ENCODE measurements at regions of chr16 and their contacts with region 1.

Region 1: DNA sequence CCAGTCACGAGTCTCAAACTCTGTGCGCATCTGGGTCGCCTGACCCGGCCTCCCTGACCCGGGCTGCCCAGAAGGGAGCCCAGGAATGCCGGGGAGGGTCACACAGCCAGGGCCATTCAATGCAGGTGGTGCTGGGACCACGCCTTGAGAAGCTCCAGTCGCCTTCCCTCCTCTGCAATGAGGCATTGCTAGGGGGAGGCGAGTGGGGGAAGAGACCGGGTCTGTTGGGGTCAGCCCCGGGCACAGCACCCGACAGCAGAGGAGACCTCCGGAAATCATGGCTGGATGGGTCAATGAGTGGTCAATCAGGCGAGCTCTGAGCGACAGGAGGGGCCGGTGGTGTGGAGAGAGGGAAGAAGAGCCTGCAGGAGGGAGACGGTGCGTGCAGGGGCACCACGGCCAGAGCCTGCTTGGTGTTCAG is 13.3 kb downstream of the JPH3 start:
- DNase-seq: no peak
- H3K4me3 Mint-ChIP-seq: no peak overlapping the region
- H3K27ac Mint-ChIP-seq: no peak overlapping the region
- H3K4me1 Mint-ChIP-seq: no peaks in the 10 kb centered on the region
- H3K27me3 Mint-ChIP-seq: peaks cover 70% of the 10 kb centered on the region
- CTCF ChIP-seq: no peak

Region 2: GRCh38 chr16:87563714-87564523 is 51.7 kb before region 1 on chr16:
- CTCF ChIA-PET with region 1: no interaction called
- intact Hi-C with region 1: loop called (anchors 2 kb)
- DNase-seq: no peak
- H3K4me3 Mint-ChIP-seq: no peak overlapping the region
- H3K27ac Mint-ChIP-seq: no peak overlapping the region
- H3K4me1 Mint-ChIP-seq: no peaks in the 10 kb centered on the region
- H3K27me3 Mint-ChIP-seq: peaks cover 35% of the 10 kb centered on the region
- CTCF ChIP-seq: no peak

Measured in Calu3 (cell line).